ENCODE measurements at regions of chr11 and their contacts with region 1.

Region 1: DNA sequence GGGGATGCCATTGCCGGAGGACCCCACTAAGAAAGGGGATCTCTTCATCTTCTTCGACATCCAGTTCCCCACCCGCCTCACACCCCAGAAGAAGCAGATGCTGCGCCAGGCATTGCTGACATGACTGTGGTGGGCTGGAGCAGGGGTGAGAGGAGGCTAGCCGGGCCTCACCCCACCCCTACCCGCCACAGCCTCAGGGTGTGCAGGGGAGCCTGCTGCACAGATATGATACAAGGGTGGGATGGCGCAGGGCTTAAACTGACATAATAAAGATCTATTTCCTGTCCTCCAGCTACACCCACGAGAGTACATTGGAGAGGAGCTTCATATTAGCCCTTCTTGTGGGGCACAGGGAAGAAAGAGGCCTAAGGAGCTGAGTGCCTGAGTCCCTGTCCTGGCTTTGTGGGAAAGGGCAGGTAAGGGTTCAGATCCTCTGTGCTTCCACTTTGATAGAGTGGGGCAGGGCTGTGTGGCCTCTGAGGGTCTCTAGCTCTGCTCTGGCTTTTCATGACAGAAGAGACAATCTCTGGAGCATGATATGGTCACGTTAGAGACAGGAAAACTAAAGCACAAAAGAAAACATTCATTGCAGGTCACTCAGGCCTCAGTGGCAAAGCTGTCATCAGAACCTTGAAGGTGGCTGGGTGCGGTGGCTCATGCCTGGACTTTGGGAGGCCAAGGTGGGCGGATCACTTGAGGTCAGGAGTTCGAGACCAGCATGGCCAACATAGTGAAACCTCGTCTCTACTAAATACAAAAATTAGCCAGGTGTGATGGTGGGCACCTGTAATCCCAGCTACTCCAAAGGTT is 12.4 kb downstream of the UCP2 start:
- DNase-seq: no peak
- ATAC-seq: no peak
- H3K4me3 ChIP-seq: no peak overlapping the region
- H3K27ac ChIP-seq: no peak overlapping the region
- H3K4me1 ChIP-seq: peaks cover 0 to 19% of the 10 kb centered on the region in 2 donors
- H3K27me3 ChIP-seq: no peaks in the 10 kb centered on the region
- CTCF ChIP-seq: no peak

Region 2: DNA sequence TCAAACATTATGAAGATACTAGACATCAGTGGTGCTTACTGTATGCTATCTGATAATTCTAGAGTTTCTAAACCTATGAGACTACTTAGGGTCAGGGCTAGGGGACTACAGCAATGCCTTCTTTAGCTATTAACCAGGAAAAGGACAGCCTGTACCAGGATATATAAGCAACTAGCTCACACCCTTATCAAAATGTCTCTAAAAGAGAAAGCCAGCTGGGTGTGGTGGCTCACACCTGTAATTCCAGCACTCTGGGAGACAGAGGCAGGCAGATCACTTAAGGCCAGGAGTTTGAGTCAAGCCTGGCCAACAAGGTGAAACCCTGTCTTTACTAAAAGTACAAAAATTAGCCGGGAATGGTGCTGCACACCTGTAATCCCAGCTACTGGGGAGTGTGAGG is 265.1 kb before region 1 on chr11:
- intact Hi-C with region 1: no loop called
- DNase-seq: no peak
- ATAC-seq: no peak
- H3K4me3 ChIP-seq: no peak overlapping the region
- H3K27ac ChIP-seq: no peak overlapping the region
- H3K4me1 ChIP-seq: no peaks in the 10 kb centered on the region
- H3K27me3 ChIP-seq: no peaks in the 10 kb centered on the region
- CTCF ChIP-seq: no peak

Region 3: GRCh38 chr11:73810637-73811036 is 159.6 kb before region 1 on chr11:
- intact Hi-C with region 1: no loop called
- DNase-seq: no peak
- ATAC-seq: peak; percentile 38
- H3K4me3 ChIP-seq: no peak overlapping the region
- H3K27ac ChIP-seq: no peak overlapping the region
- H3K4me1 ChIP-seq: no peaks in the 10 kb centered on the region
- H3K27me3 ChIP-seq: no peaks in the 10 kb centered on the region
- CTCF ChIP-seq: no peak

Region 4: DNA sequence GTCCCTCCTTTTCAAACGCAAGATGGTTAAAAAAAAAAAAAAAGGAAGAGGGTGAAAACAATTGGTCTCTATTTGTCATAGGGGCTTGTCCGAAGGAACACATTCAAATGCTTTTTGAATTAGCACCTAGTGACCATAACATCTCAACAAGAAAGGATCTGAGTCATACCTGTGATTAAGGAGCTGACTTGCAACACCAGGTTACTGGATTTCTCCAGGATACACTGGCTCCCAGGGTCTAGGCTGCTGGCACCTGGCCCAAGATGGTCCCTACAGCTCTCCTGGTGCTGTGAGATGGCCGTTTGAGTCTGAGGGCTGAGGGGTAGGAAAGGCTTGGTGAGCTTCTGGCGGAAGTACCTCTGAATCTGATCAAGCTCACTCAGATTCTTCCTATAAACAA is 67.1 kb after region 1 on chr11:
- intact Hi-C with region 1: loop called in 1 of 2 experiments (anchors 10 kb)
- DNase-seq: no peak
- ATAC-seq: peak; percentile 74
- H3K4me3 ChIP-seq: no peak overlapping the region
- H3K27ac ChIP-seq: peak overlapping the region in 1 of 2 donors; percentile 4
- H3K4me1 ChIP-seq: no peaks in the 10 kb centered on the region
- H3K27me3 ChIP-seq: no peaks in the 10 kb centered on the region
- CTCF ChIP-seq: no peak

Measured in left lung (tissue), 14 donors.